ENCODE measurements at regions of chr1 and their contacts with region 1.

Region 1: GRCh38 chr1:90417126-90417525 is 300.0 kb downstream of the BARHL2 start:
- DNase-seq: peak; percentile 56
- H3K4me3 ChIP-seq: no peak overlapping the region
- H3K27ac ChIP-seq: no peak overlapping the region
- H3K4me1 ChIP-seq: no peaks in the 10 kb centered on the region
- H3K27me3 ChIP-seq: no peaks in the 10 kb centered on the region
- CTCF ChIP-seq: no peak

Region 2: GRCh38 chr1:90325168-90325567 is 92.0 kb before region 1 on chr1:
- CTCF ChIA-PET with region 1: no interaction called
- dilution Hi-C with region 1: no loop called
- in situ Hi-C with region 1: no loop called
- intact Hi-C with region 1: no loop called
- DNase-seq: no peak
- H3K4me3 ChIP-seq: no peak overlapping the region
- H3K27ac ChIP-seq: no peak overlapping the region
- H3K4me1 ChIP-seq: peaks cover 2% of the 10 kb centered on the region
- H3K27me3 ChIP-seq: no peaks in the 10 kb centered on the region
- CTCF ChIP-seq: no peak

Region 3: DNA sequence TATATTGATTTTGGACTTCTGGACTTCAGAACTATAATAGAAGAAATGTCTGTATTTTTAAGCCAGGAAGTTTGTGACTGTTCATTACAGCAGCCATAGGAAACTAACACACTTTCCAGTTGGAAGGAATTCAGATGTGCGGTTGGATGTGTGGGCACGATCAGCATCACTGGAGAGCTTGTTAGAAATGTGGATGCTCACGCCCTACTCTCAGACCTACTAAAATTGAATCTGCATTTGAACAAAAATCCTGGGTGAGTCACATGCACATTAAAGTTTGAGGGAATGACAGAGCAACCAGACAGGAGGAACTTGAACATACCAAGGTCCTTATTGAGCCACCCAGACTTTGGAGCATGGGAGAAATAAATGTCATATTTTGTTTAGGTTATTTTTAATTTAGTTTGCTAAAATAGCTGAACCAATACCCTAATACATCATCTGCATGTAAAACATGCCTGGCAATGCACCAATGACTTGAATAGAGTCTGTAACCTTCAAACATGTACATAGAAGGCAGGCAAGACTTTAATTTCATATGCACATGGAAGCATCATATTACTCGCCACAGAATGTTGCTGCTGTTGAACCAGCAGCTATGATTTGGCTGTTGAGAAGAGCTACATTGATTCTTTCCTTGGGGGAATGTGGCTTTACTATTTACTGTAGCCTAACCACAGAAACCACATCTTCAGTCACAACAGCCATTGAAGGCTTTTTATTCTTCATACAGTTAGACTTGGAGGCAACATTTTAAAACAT is 46.3 kb before region 1 on chr1:
- CTCF ChIA-PET with region 1: no interaction called
- dilution Hi-C with region 1: loop called (anchors 5 kb)
- in situ Hi-C with region 1: no loop called
- intact Hi-C with region 1: no loop called
- DNase-seq: peak; percentile 56
- H3K4me3 ChIP-seq: no peak overlapping the region
- H3K27ac ChIP-seq: no peak overlapping the region
- H3K4me1 ChIP-seq: peaks cover 8% of the 10 kb centered on the region
- H3K27me3 ChIP-seq: no peaks in the 10 kb centered on the region
- CTCF ChIP-seq: no peak

Measured in mammary epithelial cell (primary cell).